AG04450 (cell line): ENCODE measurements at regions of chr10 and their contacts with region 1.

Region 1: DNA sequence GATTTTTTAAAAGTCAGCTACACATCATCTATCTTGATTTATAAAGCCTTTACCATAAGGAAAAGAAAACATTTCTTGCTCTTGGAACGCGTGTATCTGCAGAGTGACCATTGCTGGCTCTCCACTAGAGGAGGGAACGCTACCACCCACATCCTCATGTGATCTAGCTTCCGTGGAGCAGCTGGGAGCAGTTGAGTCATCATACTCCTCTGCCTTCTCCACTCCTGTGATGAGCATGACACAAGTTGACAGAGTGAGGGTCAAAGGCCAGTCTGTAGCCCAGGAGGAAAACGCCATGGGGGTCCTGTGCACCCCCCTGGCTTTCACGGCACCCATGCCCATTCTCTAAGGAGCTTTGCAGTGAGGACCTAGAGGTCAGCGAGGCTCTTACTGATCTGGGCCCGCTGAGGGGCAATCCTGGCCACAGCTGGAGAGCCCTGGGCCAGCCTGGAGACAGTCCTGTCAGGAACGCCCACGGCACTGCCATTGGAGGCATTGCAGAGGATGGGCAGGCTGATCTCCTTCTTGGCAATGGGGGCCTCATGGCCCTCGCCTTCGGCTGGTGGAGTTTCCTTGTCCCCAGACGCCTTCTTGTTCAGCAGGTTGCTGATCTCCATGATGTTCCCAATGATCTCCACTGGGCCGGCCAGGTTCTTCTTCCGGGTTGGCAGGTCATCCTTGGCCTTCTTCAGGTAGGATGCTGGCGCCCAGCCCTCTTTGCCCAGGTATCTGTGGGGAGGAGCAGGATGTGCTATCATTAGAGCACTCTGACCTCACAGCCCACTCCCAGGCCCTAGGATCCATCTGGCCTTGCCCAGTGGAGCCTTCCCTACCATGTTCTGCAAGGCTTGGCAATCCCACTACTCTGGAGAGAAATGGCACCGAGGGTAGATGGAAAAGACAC is 119.2 kb downstream of the NEURL1 start:
- DNase-seq: peak; percentile 54
- H3K4me3 ChIP-seq: no peak overlapping the region
- H3K27ac ChIP-seq: peak overlapping the region; percentile 73
- H3K27me3 ChIP-seq: no peaks in the 10 kb centered on the region
- CTCF ChIP-seq: peak; percentile 39

Region 2: DNA sequence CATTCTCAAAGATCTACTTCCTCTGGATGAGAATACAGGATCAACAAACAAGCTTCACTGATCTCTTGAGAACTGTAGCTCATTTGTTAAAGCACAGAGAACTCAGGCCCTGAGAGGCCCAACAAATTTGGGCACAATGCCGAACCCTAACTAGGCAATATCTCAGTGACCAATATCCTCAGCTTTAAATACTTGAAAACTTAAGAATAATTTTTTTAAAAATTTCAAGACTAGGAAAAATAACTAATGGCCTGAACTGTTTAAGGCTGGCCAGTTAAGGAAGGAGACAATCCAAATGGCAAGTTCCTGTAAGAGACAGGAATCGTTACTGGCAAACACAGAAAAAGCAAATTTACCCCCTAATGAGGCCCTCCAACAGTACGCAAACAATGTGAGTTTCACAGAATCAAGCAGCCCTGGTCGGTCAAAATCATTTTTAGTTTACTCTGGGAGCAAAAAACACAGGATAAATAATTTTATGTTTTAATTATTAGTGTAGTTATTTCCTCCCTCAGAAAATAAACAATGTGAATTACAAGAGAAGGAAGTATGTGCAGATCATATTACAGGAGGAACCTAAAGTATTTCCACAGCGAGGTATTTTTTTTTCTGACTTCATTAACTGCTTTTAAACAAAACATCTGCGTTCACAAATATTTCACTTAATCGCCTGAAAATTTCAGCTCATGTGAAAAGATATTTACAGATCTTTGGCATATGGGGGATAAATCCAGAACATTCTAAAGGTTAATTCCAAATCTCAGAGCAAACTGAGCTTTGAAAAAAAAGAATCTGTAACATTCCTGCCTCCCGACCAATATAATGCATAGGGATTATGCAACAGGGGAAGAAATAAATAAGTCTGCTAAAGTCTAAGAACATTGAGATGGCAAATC is 459.2 kb before region 1 on chr10:
- CTCF ChIA-PET with region 1: no interaction called
- POLR2A ChIA-PET with region 1: no interaction called
- DNase-seq: no peak
- H3K4me3 ChIP-seq: peak overlapping the region; percentile 33; the same call in 1 of the 2 replicates
- H3K27ac ChIP-seq: peak overlapping the region; percentile 74
- H3K27me3 ChIP-seq: no peaks in the 10 kb centered on the region
- CTCF ChIP-seq: no peak

Region 3: GRCh38 chr10:103254538-103255325 is 358.0 kb before region 1 on chr10:
- CTCF ChIA-PET with region 1: no interaction called
- POLR2A ChIA-PET with region 1: interaction called, 11 read pairs
- DNase-seq: no peak
- H3K4me3 ChIP-seq: no peak overlapping the region
- H3K27ac ChIP-seq: no peak overlapping the region
- H3K27me3 ChIP-seq: peaks cover 2% of the 10 kb centered on the region
- CTCF ChIP-seq: no peak

Region 4: GRCh38 chr10:103592186-103593021 is 20.3 kb before region 1 on chr10:
- CTCF ChIA-PET with region 1: interaction called, 12 read pairs
- POLR2A ChIA-PET with region 1: no interaction called
- DNase-seq: no peak
- H3K4me3 ChIP-seq: no peak overlapping the region
- H3K27ac ChIP-seq: no peak overlapping the region
- H3K27me3 ChIP-seq: no peaks in the 10 kb centered on the region
- CTCF ChIP-seq: peak; percentile 77

Region 5: GRCh38 chr10:103598654-103599115 is 14.0 kb before region 1 on chr10:
- CTCF ChIA-PET with region 1: interaction called, 12 read pairs
- POLR2A ChIA-PET with region 1: interaction called, 7 read pairs
- DNase-seq: peak; percentile 60
- H3K4me3 ChIP-seq: no peak overlapping the region
- H3K27ac ChIP-seq: no peak overlapping the region
- H3K27me3 ChIP-seq: no peaks in the 10 kb centered on the region
- CTCF ChIP-seq: peak; percentile 78